Right ventricle myocardium superior (tissue), 1 donor: ENCODE measurements at regions of chr16 and their contacts with region 1.

Region 1: GRCh38 chr16:11396241-11397048 is 51.2 kb downstream of the RMI2 start:
- DNase-seq: peak; percentile 81
- ATAC-seq: peak; percentile 85

Region 2: DNA sequence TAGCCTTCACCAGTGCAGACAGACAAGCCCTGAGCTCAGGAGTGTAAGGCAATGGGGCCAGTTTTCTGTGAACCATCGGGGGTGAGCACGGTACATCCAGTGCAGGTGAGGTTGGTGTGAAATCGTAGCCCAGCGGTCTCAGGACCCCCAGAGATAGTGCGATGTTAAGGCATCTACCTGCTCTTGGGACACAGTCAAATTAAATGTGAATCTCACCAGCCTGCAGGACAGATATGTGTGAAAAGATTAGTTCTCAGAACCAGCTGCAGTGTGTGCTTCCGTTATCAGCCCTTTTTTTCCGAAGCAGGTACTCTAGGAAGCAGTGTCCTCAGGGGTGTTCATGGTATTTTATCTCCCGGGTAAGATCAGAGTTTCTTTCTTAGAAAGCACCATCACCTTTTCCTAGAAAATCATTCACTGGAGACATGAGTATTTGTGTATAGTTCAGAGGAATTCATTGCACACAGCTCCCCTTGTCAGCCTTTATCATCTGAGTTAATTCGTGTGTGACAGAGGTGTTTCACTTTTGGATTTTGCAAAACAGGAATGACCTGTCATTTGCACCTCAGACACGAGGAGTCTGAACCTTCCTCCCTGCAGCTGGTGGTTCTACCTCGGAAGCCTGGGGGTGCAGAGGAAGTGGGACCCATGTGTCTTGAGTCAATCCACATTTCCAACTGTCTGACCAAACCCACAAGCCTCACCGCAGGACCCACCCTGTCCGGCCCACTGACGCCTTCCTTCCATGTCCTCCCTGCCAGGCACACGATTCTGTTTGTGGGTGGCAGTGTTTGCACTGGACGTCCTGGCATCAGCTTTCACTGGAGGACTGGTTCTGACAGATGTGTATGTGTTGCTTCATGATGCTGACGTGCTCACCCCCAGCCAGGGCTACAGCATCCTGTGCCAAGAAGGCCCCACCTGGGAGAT is 344.3 kb before region 1 on chr16:
- intact Hi-C with region 1: no loop called
- DNase-seq: no peak
- ATAC-seq: no peak

Region 3: DNA sequence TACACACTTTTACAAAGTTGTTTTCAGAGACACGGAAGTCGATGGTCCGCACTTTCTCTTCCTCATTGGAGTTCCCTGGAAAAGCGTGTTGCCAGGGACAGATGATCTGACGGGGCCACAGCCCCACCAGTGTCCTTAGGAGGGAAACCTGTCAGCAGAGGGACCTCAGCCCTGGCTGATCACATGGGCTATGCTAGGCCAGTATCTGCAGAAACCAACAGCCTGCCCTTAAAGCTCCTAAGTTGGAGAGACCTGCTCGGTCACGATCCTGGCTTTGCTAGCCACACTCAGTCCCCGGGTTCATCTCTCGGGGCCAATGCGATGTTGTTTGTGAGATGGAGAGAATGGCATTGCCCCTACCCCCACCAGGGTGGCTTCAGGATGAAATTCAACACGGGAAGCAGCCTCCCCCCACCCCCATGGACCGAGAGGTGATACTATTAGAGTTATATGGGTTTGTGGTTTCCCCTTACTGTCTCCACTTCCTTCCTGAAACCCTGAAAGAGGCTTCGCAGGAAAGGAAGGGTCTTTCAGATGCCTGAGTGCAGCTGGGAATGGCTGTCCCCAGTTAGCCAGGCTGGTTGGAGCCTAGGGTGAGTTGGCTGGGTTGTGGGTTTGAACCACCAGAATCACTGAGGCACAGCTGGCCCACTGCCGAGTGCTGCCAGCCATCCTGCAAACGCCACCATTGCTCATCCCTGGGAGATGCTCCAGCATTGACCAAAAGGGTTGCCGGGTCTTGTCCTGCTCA is 34.6 kb before region 1 on chr16:
- intact Hi-C with region 1: no loop called
- DNase-seq: no peak
- ATAC-seq: no peak

Region 4: GRCh38 chr16:11639925-11640899 is 243.8 kb after region 1 on chr16:
- intact Hi-C with region 1: loop called (anchors 10 kb)
- DNase-seq: peak; percentile 89
- ATAC-seq: peak; percentile 94

Region 5: DNA sequence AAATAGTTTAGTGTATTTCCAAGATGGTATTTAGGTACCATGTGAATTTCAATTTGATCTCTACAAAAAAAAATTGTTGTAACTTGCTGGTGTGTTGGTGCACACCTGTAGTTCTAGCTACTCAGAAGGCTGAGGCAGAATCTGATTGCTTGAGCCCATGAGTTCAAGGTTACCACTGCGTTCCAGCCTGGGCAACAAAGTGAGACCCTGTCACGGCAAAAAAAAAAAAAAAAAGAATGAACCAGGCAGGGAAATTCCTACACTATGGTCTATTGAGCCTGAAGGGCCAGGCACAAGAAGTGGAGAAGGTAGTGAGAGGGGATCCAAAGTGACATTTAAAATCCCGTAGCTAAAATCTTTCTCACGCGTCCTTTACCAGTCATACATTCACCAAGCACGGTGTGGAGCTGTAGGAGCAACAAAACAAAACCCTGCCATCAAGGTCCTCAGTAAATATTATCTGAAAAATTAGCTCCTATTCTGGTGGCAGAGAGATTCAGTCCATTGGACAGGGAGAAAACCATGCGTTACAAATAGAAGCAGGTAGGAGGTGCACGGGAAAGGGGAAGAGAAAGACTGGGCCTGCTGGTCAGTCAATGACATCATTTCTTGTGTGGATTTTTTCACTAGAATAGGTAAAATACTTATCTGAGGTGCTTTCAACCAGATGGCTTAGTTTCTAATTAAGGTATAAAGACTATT is 319.0 kb after region 1 on chr16:
- intact Hi-C with region 1: loop called (anchors 5 kb)
- DNase-seq: no peak
- ATAC-seq: no peak

Region 6: DNA sequence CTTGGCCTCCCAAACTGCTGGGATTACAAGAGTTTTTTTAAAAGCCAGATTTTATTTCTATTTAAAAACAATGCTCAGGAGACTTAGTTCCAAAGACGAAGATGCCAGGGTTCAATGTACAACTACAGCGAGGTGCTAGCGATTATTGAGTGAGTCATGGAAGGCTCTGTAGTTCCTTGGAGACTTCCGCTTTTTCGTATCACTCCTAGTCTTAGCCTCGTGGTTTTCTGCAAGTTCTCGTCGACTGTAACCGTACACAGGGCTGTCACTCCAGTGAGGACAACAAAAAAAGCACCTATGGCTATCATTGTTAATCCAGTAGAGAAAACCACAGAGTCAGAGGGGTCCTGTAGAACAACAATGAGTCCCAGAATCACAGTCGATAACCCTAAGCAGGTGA is 423.4 kb after region 1 on chr16:
- intact Hi-C with region 1: loop called (anchors 10 kb)
- DNase-seq: no peak
- ATAC-seq: peak; percentile 25

Region 7: GRCh38 chr16:12067714-12068401 is 671.4 kb after region 1 on chr16:
- intact Hi-C with region 1: loop called (anchors 10 kb)
- DNase-seq: peak; percentile 48
- ATAC-seq: peak; percentile 81